H1 (cell line): ENCODE measurements at regions of chr3 and their contacts with region 1.

Region 1: GRCh38 chr3:30073622-30074021 is 532.8 kb upstream of the TGFBR2 start:
- DNase-seq: no peak
- H3K4me3 ChIP-seq: no peak overlapping the region
- H3K27ac ChIP-seq: no peak overlapping the region
- H3K4me1 ChIP-seq: no peaks in the 10 kb centered on the region
- H3K27me3 ChIP-seq: peaks cover under 1 to 11% (median 4%) of the 10 kb centered on the region in 4 experiments; a peak in 6 of 7 replicates
- CTCF ChIP-seq: no peak
- EP300 ChIP-seq: no peak
- POLR2A ChIP-seq: no peak
- RAD21 ChIP-seq: no peak

Region 2: DNA sequence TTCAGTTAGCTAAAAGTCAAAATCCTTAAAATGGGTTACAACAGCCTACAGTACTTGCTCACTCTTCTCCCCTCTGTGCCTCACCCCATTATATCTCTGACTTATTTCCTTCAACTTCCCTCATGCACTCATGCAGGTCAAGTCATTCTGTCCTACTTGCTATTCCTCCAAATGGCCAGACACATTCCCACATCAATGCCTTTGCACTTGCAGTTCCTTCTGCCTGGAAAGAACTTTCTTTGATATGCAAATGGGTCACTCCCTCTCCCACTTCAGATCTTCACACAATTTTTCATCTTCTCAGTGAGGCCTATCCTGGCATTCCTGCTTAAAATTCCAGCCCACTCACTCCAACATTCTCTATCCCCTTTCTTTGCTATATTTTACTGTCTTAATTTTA is 14.4 kb before region 1 on chr3:
- CTCF ChIA-PET with region 1: interaction called, 10 read pairs
- POLR2A ChIA-PET with region 1: no interaction called
- DNase-seq: no peak
- H3K4me3 ChIP-seq: no peak overlapping the region
- H3K27ac ChIP-seq: no peak overlapping the region
- H3K4me1 ChIP-seq: peaks cover 0 to 8% (median 0%) of the 10 kb centered on the region in 4 experiments; a peak in 2 of 7 replicates
- H3K27me3 ChIP-seq: 0 out of 7 replicates have a peak, but pooled peaks cover 0 to 2% (median 0%) of the 10 kb centered on the region in 4 experiments
- CTCF ChIP-seq: no peak
- EP300 ChIP-seq: no peak
- POLR2A ChIP-seq: no peak
- RAD21 ChIP-seq: no peak